ENCODE measurements at regions of chr7 and their contacts with region 1.

Region 1: DNA sequence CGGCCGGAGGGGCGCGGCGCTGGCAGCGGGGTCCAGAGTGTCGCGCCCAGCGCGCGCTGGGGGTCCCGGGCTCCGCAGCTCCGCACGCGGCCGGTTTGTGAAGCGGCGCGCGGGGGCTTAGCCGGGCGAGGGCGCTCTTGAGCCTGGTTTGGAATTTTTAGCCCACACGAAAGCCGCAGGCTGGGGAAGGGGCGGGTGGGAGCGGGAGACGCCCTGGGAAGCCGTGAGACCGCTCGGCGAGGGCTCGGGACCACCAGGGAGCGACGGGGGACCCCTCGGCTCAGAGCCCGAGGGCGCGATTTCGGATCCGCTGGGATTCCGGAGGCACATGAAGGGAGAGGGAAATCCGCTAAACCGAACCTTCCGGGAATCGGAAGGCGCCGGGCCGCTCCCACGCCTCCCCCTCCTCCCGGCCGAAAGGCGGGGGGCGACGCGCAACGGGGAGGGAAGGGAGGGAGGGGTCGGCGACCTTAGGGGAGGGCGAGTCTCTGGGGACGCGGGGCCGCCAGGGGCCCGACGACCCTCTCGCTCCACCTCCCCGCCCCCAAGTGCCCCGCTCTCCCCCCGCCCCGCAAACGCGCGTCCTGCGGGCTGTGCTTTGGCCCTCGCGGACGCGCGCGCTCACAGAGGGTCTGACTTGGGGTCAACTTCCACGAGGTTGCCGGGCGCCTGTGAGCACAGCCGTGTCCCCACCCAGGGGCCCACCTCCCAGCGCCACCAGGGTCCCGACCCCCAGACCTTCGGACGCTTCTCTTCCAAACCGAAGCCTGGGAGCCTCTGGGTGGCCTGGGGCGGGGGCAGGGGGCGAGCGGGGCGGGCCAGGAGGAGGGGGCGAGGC is 5.1 kb upstream of the ELFN1 start:
- DNase-seq: peak; percentile 47
- ATAC-seq: no peak
- H3K4me3 Mint-ChIP-seq: peak overlapping the region; percentile 38
- H3K27ac Mint-ChIP-seq: no peak overlapping the region
- H3K4me1 Mint-ChIP-seq: peaks cover 12% of the 10 kb centered on the region
- H3K27me3 Mint-ChIP-seq: peaks cover 37% of the 10 kb centered on the region
- CTCF ChIP-seq: no peak

Region 2: DNA sequence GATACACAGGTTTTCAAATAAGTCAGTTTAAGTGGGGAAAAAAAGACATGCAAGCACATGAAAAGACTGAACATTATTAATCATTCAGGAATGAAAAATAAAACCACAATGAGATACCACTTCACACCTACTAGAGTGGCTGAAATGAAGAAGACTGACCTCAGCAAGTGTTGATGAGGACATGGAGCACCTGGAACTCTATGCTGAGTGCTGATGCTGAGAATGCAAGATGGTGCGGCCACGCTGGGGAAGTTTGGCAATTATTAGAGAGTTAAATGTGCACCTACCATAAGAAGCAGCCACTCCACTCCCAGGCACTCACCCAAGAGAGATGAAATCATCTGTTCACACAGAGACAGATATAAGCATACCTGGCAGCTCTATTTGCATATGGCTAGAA is 27.8 kb before region 1 on chr7:
- CTCF ChIA-PET with region 1: no interaction called
- POLR2A ChIA-PET with region 1: no interaction called
- intact Hi-C with region 1: no loop called
- DNase-seq: no peak
- ATAC-seq: no peak
- H3K4me3 Mint-ChIP-seq: no peak overlapping the region
- H3K27ac Mint-ChIP-seq: no peak overlapping the region
- H3K4me1 Mint-ChIP-seq: no peaks in the 10 kb centered on the region
- H3K27me3 Mint-ChIP-seq: peaks cover 13% of the 10 kb centered on the region
- CTCF ChIP-seq: no peak

Region 3: DNA sequence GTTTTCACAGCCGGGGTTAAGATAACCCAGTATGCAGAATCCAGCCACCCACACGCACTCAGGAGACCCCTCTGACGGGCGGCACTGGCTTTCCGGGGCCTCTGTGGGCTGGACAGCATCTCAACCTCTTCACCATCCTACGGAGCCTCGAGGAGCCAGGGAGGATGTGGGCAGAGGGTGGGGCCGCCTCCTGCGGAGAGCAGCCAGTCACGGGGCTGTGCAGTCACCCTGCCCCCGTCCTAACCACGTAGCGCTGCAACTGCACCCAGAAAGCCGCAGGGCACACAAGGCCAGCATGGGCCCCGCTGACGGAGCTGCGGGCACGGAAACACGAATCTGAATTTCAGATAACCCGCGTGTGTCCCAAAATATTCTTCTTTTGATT is 275.5 kb after region 1 on chr7:
- CTCF ChIA-PET with region 1: no interaction called
- POLR2A ChIA-PET with region 1: no interaction called
- intact Hi-C with region 1: loop called (anchors 10 kb)
- DNase-seq: peak; percentile 70
- ATAC-seq: peak; percentile 97
- H3K4me3 Mint-ChIP-seq: peak overlapping the region; percentile 84
- H3K27ac Mint-ChIP-seq: peak overlapping the region; percentile 91
- H3K4me1 Mint-ChIP-seq: peaks cover 41% of the 10 kb centered on the region
- H3K27me3 Mint-ChIP-seq: no peaks in the 10 kb centered on the region
- CTCF ChIP-seq: no peak

Region 4: DNA sequence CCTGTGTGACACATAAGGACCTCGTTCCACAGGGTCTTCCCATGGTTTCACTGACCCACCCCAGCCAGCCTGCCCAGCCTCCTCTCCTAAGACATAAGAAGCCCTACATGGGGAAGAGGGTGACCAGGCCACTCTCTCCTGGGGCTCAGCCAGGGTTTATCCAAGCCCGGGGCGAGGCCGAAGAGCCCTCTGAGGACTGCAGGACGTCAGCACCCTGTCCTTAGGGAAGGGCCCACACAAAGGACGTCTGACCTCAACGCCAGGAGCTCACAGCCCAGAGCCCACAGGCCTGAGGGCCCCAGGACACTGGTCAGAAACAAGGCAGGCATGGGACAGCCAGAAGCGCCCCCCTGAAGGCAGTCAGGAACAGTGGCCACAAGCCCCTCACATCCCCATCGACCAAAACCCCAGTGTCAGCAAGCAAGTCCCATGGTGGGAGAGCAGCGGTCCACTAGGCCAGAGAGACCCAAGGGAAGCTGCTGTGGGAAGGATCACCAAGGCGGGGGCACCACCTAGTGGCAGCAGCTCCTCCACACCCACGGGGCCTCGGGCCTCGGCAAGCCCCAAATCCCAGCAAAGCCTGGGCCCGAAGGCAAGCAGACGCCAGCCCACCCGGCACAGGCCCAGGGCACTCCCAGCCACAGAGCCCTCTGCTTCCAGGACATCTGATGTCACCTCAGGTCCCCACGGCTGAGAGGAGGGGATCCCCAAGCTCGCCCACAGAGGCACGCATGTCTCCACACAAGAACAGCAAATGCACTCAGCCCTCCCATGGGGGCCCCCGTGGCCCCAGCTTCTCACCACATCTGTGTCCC is 544.4 kb after region 1 on chr7:
- CTCF ChIA-PET with region 1: interaction called, 8 read pairs
- POLR2A ChIA-PET with region 1: no interaction called
- intact Hi-C with region 1: loop called (anchors 1 kb)
- DNase-seq: peak; percentile 58
- ATAC-seq: peak; percentile 85
- H3K4me3 Mint-ChIP-seq: no peak overlapping the region
- H3K27ac Mint-ChIP-seq: peak overlapping the region; percentile 59
- H3K4me1 Mint-ChIP-seq: peaks cover 11% of the 10 kb centered on the region
- H3K27me3 Mint-ChIP-seq: no peaks in the 10 kb centered on the region
- CTCF ChIP-seq: no peak